Activated CD8-positive, alpha-beta T cell treated with anti-CD3 and anti-CD28 coated beads for 36 hours (primary cell): ENCODE measurements at regions of chr17 and their contacts with region 1.

Region 1: DNA sequence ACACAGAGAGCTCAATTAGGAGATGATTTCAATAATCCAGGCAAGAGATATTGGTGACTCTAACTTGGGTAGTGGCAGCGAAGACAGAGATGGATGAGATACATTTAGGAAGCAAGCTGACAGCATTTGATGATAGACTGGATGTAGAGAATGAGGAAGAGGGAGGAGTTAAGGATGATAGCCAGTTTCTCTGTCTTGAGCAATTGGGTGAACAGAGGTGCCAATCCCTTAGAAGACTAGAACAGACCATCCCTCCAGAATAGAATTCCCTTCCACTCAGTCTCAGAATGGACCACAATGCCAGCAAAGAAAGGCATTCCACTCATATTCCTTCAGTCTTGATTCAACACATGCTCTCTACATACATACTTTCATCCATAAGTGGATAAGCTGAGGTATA is 17.2 kb downstream of the POLG2 start:
- DNase-seq: no peak
- ATAC-seq: no peak
- H3K4me3 Mint-ChIP-seq: no peak overlapping the region
- H3K27ac Mint-ChIP-seq: no peak overlapping the region
- H3K4me1 Mint-ChIP-seq: no peaks in the 10 kb centered on the region
- H3K27me3 Mint-ChIP-seq: no peaks in the 10 kb centered on the region
- CTCF ChIP-seq: no peak

Region 2: GRCh38 chr17:64378890-64379354 is 100.7 kb before region 1 on chr17:
- CTCF ChIA-PET with region 1: no interaction called
- POLR2A ChIA-PET with region 1: no interaction called
- intact Hi-C with region 1: no loop called
- DNase-seq: no peak
- ATAC-seq: no peak
- H3K4me3 Mint-ChIP-seq: no peak overlapping the region
- H3K27ac Mint-ChIP-seq: peak overlapping the region; percentile 60
- H3K4me1 Mint-ChIP-seq: peaks cover 46% of the 10 kb centered on the region
- H3K27me3 Mint-ChIP-seq: no peaks in the 10 kb centered on the region
- CTCF ChIP-seq: no peak

Region 3: DNA sequence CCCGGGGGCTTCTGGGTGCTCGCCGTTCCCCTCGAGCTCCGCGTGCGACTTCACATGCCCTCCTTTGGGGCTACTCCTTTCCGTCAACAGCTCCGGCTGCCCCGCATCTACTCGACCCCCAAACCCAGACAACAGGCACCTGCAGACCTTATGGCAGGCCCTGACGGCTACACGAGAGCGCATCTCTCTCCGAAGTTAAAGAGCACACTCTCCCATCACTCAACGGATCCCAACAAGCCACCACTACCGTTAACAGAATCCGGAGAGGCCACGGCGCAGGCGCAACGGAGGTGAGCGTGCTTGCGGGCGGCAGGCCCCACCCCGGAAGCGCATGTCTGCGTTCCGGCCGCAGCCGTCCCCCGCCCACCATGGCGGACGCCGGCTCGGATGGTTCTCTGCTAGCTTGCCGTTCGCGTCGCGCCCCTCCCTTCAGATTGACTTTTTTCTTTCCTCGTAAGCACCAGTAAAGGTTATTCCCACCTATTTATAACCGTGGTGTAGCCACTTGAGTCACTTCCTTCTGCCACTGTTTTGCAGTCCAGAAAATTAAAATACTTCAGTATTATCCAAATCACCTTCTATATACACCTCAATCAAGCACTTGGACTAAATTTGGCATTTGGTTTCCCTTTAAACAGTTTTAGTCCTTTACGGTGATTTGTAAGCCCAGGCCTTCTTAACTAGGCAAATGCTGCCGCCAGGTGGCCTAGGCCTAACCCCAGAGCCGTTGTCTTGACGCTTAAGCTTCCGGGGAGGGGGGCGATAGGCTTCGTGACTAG is 17.3 kb after region 1 on chr17 and contains the start of gene POLG2:
- CTCF ChIA-PET with region 1: interaction called, 41 read pairs
- POLR2A ChIA-PET with region 1: interaction called, 20 read pairs
- intact Hi-C with region 1: no loop called
- DNase-seq: peak; percentile 97
- ATAC-seq: peak; percentile 83
- H3K4me3 Mint-ChIP-seq: peak within 1 kb of the TSS; percentile 100
- H3K27ac Mint-ChIP-seq: peak within 1 kb of the TSS; percentile 97
- H3K4me1 Mint-ChIP-seq: peaks cover 61% of the 10 kb centered on the region
- H3K27me3 Mint-ChIP-seq: no peaks in the 10 kb centered on the region
- CTCF ChIP-seq: peak; percentile 69
- total RNA-seq, gene POLG2: 37.3 to 41.1 TPM

Region 4: GRCh38 chr17:64520359-64520758 is 40.7 kb after region 1 on chr17:
- CTCF ChIA-PET with region 1: no interaction called
- POLR2A ChIA-PET with region 1: no interaction called
- intact Hi-C with region 1: no loop called
- DNase-seq: no peak
- ATAC-seq: no peak
- H3K4me3 Mint-ChIP-seq: no peak overlapping the region
- H3K27ac Mint-ChIP-seq: no peak overlapping the region
- H3K4me1 Mint-ChIP-seq: peaks cover 9% of the 10 kb centered on the region
- H3K27me3 Mint-ChIP-seq: no peaks in the 10 kb centered on the region
- CTCF ChIP-seq: no peak

Region 5: GRCh38 chr17:64554028-64554637 is 74.5 kb after region 1 on chr17:
- CTCF ChIA-PET with region 1: no interaction called
- POLR2A ChIA-PET with region 1: no interaction called
- intact Hi-C with region 1: no loop called
- DNase-seq: no peak
- ATAC-seq: no peak
- H3K4me3 Mint-ChIP-seq: no peak overlapping the region
- H3K27ac Mint-ChIP-seq: peak overlapping the region; percentile 7
- H3K4me1 Mint-ChIP-seq: peaks cover 4% of the 10 kb centered on the region
- H3K27me3 Mint-ChIP-seq: no peaks in the 10 kb centered on the region
- CTCF ChIP-seq: no peak